ENCODE measurements at regions of chr3 and their contacts with region 1.

Region 1: GRCh38 chr3:132722164-132723024 is at the start of gene NPHP3:
- DNase-seq: peak; percentile 93
- ATAC-seq: peak; percentile 79
- H3K4me3 ChIP-seq: peak within 1 kb of the TSS; percentile 51 to 93 (median 69)
- H3K4me3 Mint-ChIP-seq: peak within 1 kb of the TSS; percentile 92
- H3K27ac ChIP-seq: peak within 1 kb of the TSS; percentile 54 to 65
- H3K27ac Mint-ChIP-seq: peak within 1 kb of the TSS; percentile 93
- H3K4me1 ChIP-seq: peaks cover 17 to 20% of the 10 kb centered on the region in 2 donors
- H3K4me1 Mint-ChIP-seq: peaks cover 31% of the 10 kb centered on the region
- H3K27me3 ChIP-seq: no peaks in the 10 kb centered on the region
- H3K27me3 Mint-ChIP-seq: peaks cover 4% of the 10 kb centered on the region
- CTCF ChIP-seq: no peak
- total RNA-seq, gene NPHP3: 47.8 and 48.7 TPM in 2 replicates

Region 2: GRCh38 chr3:132659365-132660051 is 62.9 kb before region 1 on chr3 and contains the start of gene ACAD11:
- CTCF ChIA-PET with region 1: no interaction called
- POLR2A ChIA-PET with region 1: no interaction called
- intact Hi-C with region 1: loop called (anchors 1 kb)
- DNase-seq: peak; percentile 78
- ATAC-seq: peak; percentile 71
- H3K4me3 ChIP-seq: peak within 1 kb of the TSS; percentile 67 to 97 (median 77)
- H3K4me3 Mint-ChIP-seq: peak within 1 kb of the TSS; percentile 97
- H3K27ac ChIP-seq: peak within 1 kb of the TSS; percentile 69 to 80
- H3K27ac Mint-ChIP-seq: peak within 1 kb of the TSS; percentile 95
- H3K4me1 ChIP-seq: peaks cover 15 to 21% of the 10 kb centered on the region in 2 donors
- H3K4me1 Mint-ChIP-seq: peaks cover 31% of the 10 kb centered on the region
- H3K27me3 ChIP-seq: no peaks in the 10 kb centered on the region
- H3K27me3 Mint-ChIP-seq: no peaks in the 10 kb centered on the region
- CTCF ChIP-seq: peak; percentile 62
- total RNA-seq, gene ACAD11: 26.9 and 30.2 TPM in 2 replicates

Region 3: DNA sequence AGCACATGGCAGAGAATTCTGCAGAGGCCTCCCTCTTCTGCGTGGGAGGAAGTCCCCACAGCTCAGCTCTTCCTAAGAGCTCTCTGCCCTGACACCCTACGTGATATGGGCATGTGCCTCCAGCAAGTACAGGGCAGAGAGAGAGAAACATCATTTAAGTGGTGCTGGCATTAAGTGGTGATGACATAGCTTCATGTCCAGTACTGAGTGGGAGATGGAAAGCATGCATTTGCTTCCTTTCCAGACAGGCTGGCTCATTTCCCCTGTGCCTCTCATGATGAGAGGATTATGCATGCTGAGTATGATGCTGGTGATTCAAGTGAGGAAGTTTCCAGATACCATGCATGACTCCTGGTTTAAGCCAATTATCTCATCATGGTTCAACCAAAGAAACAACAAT is 704.3 kb after region 1 on chr3:
- CTCF ChIA-PET with region 1: interaction called, 31 read pairs
- POLR2A ChIA-PET with region 1: interaction called, 3 read pairs
- intact Hi-C with region 1: loop called (anchors 1 kb)
- DNase-seq: no peak
- ATAC-seq: no peak
- H3K4me3 ChIP-seq: no peak overlapping the region
- H3K4me3 Mint-ChIP-seq: no peak overlapping the region
- H3K27ac ChIP-seq: no peak overlapping the region
- H3K27ac Mint-ChIP-seq: no peak overlapping the region
- H3K4me1 ChIP-seq: peaks cover 0 to 16% of the 10 kb centered on the region in 2 donors
- H3K4me1 Mint-ChIP-seq: peaks cover 13% of the 10 kb centered on the region
- H3K27me3 ChIP-seq: peaks cover 0 to 8% (median 2%) of the 10 kb centered on the region in 4 experiments
- H3K27me3 Mint-ChIP-seq: peaks cover 3% of the 10 kb centered on the region
- CTCF ChIP-seq: no peak

Region 4: GRCh38 chr3:133805527-133806475 is 1083.4 kb after region 1 on chr3 and contains the start of gene SRPRB:
- CTCF ChIA-PET with region 1: interaction called, 3 read pairs
- POLR2A ChIA-PET with region 1: no interaction called
- intact Hi-C with region 1: loop called (anchors 1 kb)
- DNase-seq: peak; percentile 95
- ATAC-seq: peak; percentile 98
- H3K4me3 ChIP-seq: peak within 1 kb of the TSS; percentile 56 to 95 (median 87)
- H3K4me3 Mint-ChIP-seq: peak within 1 kb of the TSS; percentile 99
- H3K27ac ChIP-seq: peak within 1 kb of the TSS; percentile 75 to 80
- H3K27ac Mint-ChIP-seq: peak within 1 kb of the TSS; percentile 94
- H3K4me1 ChIP-seq: peaks cover 11 to 13% of the 10 kb centered on the region in 2 donors
- H3K4me1 Mint-ChIP-seq: peaks cover 18% of the 10 kb centered on the region
- H3K27me3 ChIP-seq: no peaks in the 10 kb centered on the region
- H3K27me3 Mint-ChIP-seq: no peaks in the 10 kb centered on the region
- CTCF ChIP-seq: no peak
- total RNA-seq, gene SRPRB: 28.8 and 29.7 TPM in 2 replicates

Region 5: GRCh38 chr3:134473868-134474546 is 1751.6 kb after region 1 on chr3:
- CTCF ChIA-PET with region 1: interaction called, 4 read pairs
- POLR2A ChIA-PET with region 1: no interaction called
- intact Hi-C with region 1: loop called (anchors 5 kb)
- DNase-seq: peak; percentile 76
- ATAC-seq: peak; percentile 58
- H3K4me3 ChIP-seq: no peak overlapping the region
- H3K4me3 Mint-ChIP-seq: no peak overlapping the region
- H3K27ac ChIP-seq: no peak overlapping the region
- H3K27ac Mint-ChIP-seq: no peak overlapping the region
- H3K4me1 ChIP-seq: no peaks in the 10 kb centered on the region
- H3K4me1 Mint-ChIP-seq: no peaks in the 10 kb centered on the region
- H3K27me3 ChIP-seq: no peaks in the 10 kb centered on the region
- H3K27me3 Mint-ChIP-seq: no peaks in the 10 kb centered on the region
- CTCF ChIP-seq: peak; percentile 81

Measured in B cell (primary cell).